Right ventricle myocardium superior (tissue), 1 donor: ENCODE measurements at regions of chr10 and their contacts with region 1.

Region 1: DNA sequence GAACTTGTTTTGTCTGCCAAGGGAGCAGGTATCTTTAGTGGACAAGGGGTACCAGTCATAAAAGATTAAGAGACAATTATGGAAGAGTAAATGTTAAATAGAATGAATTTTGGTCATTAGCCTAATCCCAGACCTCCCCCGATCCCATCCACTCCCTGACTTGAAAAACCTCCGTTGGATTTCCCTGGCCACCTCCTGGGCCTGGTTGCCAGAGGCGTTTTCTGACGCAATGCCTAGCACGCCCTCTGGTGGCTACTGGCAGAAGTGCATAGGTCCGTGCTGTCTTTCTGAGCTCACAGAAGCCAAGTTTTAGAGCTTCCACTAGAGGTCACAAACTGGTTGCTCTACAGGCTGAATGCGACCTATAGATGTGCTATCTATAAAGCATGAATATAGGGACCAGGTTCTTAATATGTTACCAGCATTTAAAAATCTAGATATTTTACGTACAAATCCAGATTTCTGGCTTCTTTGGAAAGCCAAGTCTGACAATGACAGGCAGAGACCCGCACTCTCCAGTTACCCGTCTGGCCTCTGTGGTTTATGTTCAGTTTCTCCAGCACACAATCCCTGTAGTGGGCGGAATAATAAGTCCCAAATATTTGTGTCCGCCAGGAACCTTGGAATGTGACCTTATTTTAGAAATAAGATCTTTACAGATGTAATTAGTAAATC is 39.8 kb downstream of the SPOCK2 start:
- DNase-seq: peak; percentile 93
- ATAC-seq: peak; percentile 87

Region 2: DNA sequence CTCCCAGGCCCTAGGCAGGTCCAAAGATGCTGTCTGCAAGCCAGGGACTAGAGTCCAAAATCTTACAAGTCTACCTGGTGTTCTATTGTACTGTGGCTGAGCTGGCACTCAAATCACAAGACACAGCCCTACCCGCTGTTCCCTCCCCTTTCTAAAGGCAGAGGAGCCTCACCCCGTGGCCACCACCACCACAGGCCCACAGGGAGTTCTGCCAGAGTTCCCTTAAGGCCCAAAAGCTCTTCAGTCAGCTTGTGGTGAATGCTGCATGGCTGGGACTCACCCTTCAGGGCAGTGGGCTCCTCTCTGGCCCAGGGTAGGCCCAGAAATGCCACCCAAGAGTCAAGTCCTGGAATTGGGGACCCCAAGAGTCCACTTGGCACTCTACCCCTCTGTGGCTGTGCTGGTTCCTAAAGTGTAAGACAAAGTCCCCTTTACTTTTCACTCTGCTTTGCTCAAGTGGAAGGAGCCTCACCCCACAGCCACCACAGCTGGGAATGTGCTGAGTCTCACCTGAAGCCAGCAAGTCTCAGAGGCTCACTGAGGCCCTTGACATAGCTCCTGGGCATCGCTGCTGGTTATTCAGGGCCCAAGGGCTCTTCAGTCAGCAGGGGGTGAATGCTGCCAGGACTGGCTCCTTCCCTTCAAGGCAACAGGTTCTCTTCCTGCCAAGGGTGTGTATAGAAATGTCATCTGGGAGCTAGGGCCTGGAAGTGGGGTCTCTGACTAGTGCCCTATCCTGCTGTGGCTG is 148.7 kb before region 1 on chr10:
- intact Hi-C with region 1: loop called (anchors 5 kb)
- DNase-seq: no peak
- ATAC-seq: no peak

Region 3: DNA sequence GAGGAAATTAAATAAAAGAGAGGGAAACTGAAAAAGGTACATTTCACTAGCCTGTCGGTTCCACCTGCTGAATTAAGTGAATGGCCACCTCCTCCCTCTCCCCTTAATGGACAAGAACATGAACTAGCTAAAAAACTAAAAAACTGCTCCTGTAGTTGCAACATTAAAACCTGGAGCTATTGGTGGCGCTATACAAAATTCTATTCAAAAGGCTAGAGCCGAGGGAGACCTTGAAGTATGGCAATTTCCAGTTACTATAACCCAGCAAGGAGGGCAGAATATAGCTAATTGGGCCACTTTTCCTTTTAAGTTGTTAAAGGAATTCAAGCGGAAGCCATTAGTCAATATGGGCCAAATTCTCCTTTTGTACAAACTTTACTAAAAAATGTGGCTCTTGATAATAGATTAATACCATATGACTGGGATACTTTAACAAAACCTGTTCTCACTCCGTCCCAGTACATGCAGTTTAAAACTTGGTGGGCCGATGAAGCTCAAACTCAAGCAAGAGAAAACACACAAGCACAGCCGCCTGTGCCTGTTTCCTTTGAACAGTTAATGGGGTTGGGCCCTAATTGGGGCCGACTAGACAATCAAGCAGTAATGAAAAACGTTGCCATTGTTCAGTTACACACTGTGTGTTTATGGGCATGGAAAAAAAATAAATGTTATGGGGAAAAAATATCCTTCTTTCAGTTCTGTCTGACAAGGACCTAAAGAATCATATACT is 90.9 kb before region 1 on chr10:
- intact Hi-C with region 1: loop called (anchors 1 kb)
- DNase-seq: no peak
- ATAC-seq: no peak

Region 4: GRCh38 chr10:71969929-71970712 is 78.5 kb before region 1 on chr10:
- intact Hi-C with region 1: no loop called
- DNase-seq: no peak
- ATAC-seq: peak; percentile 32

Region 5: GRCh38 chr10:72215652-72216549 is 167.3 kb after region 1 on chr10 and contains the starts of genes ANAPC16 and ASCC1:
- intact Hi-C with region 1: loop called (anchors 5 kb)
- DNase-seq: peak; percentile 94
- ATAC-seq: peak; percentile 98
- total RNA-seq, gene ANAPC16: 242 TPM
- total RNA-seq, gene ASCC1: 32.0 TPM

Region 6: DNA sequence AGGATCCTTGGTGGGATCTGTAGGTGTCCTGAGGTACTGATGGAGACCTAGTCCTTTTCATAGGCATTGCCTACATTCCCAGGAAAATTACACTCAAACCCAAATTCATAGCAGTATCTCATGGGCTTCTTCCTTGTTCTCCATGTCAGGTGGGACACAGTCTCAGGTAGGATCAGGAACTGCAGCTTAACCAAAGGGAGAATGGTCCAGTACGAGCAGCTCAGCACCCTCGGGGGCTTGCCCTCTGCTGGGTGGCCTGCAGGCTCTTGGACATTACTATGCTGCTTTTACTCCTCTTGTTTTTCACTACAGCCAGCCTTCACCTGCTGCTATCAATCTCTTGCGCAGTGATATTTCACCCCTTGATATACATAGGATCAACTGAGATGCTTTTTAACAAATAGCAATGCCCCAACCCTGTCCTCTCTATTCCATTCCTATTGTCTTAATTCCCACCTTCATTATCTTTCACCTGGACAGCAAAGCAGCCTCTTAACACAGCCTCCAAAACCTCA is 877.4 kb after region 1 on chr10:
- intact Hi-C with region 1: no loop called
- DNase-seq: no peak
- ATAC-seq: no peak